Head of caudate nucleus (tissue), 42 donors: ENCODE measurements at regions of chr1 and their contacts with region 1.

Region 1: GRCh38 chr1:39973503-39974135 is 18.7 kb downstream of the MFSD2A start:
- DNase-seq: peak; percentile 60 to 94 (median 83)

Region 2: DNA sequence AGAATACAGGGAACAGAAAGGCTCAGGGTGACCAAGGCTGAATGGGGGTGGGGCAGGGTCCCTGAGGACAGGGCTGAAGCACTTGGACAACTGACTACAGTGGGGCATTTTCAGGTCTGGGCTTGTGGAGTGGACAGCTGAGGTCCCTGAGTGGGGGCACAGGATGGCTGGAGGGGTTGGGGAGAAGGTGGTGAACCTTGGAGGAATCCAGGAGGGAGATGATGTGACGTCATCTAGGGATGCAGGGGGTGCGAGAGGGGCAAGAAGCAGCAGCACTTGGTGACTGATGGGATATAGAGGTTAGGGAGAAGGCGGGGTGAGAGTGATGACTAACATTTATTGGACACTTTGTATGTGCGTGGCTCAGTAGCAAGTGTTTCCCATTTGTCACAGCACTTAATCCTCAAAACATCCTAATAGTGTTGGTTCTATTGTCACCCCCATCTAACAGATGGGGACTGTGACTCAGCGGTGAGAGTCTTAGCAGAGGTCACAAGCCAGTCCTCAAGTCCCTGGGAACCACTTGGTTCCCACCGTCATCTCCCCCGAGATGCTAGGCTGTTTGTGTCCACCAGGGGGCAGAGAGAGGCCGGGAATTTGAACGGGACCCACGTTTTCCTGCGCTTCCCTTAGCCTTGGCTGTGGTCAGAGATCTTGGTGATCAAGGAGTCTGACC is 157.1 kb before region 1 on chr1:
- intact Hi-C with region 1: loop called (anchors 1 kb)
- DNase-seq: peak; percentile 22 to 89 (median 74)

Region 3: DNA sequence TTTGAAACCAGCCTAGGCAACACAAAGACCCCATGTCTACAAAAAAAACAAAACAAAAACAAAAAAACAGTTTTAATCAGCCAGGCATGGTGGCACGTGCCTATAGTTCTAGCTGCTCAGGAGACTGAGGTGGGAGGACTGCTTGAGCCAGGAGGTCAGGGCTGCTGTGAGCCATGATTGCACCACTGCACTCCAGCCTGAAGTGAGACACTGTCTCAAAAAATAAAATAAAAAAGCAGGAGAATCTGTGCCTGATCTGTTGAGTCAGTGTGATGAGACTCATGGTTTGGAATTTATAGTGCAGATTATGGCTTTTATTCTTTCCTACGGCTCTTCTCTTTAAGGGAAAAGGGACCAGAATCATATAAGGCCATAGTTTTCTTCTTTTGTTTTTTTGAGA is 106.9 kb before region 1 on chr1:
- intact Hi-C with region 1: no loop called
- DNase-seq: no peak

Region 4: DNA sequence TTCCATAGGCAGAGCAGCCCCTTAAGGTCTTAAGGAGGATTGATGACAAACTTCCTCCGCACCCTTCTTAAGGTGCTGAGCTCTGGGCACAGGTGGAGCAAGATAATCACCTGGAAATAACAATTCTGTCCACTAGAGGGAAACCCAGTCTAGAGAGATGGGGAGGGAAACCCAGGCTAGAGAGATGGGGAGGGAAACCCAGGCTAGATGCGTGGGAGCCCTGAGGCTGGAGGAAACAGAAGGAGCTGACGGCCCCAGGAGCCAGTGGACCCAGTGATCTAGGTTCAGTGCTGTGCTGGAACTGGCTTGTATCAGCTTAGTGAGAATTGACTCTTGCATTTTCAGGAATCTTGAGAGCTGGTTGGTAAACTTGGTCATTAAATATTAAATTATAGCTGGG is 54.1 kb before region 1 on chr1:
- intact Hi-C with region 1: loop called (anchors 5 kb)
- DNase-seq: peak in 33 of 42 donors; percentile 13 to 77 (median 41)